CD14-positive monocyte (primary cell): ENCODE measurements at regions of chr6 and their contacts with region 1.

Region 1: GRCh38 chr6:14254505-14254904 is 136.9 kb downstream of the CD83 start:
- DNase-seq: no peak
- H3K4me3 ChIP-seq: no peak overlapping the region
- H3K4me3 Mint-ChIP-seq: no peak overlapping the region
- H3K27ac ChIP-seq: no peak overlapping the region
- H3K27ac Mint-ChIP-seq: no peak overlapping the region
- H3K4me1 ChIP-seq: no peaks in the 10 kb centered on the region
- H3K4me1 Mint-ChIP-seq: no peaks in the 10 kb centered on the region
- H3K27me3 ChIP-seq: no peaks in the 10 kb centered on the region
- H3K27me3 Mint-ChIP-seq: peaks cover 0 to 3% (median 0%) of the 10 kb centered on the region in 3 donors
- CTCF ChIP-seq: no peak

Region 2: GRCh38 chr6:14292119-14292518 is 37.6 kb after region 1 on chr6:
- intact Hi-C with region 1: loop called in 1 of 2 experiments (anchors 5 kb)
- DNase-seq: no peak
- H3K4me3 ChIP-seq: no peak overlapping the region
- H3K4me3 Mint-ChIP-seq: no peak overlapping the region
- H3K27ac ChIP-seq: no peak overlapping the region
- H3K27ac Mint-ChIP-seq: no peak overlapping the region
- H3K4me1 ChIP-seq: no peaks in the 10 kb centered on the region
- H3K4me1 Mint-ChIP-seq: peaks cover 6% of the 10 kb centered on the region
- H3K27me3 ChIP-seq: no peaks in the 10 kb centered on the region
- H3K27me3 Mint-ChIP-seq: peaks cover 0 to 2% (median 0%) of the 10 kb centered on the region in 3 donors
- CTCF ChIP-seq: no peak